Natural killer cell (primary cell): ENCODE measurements at regions of chr11 and their contacts with region 1.

Region 1: GRCh38 chr11:114134870-114135269 is 75.4 kb downstream of the ZBTB16 start:
- DNase-seq: no peak
- ATAC-seq: no peak
- H3K4me3 ChIP-seq: no peak overlapping the region
- H3K4me3 Mint-ChIP-seq: no peak overlapping the region
- H3K27ac ChIP-seq: no peak overlapping the region
- H3K27ac Mint-ChIP-seq: peak overlapping the region; percentile 85 to 88
- H3K4me1 ChIP-seq: peaks cover 83% of the 10 kb centered on the region
- H3K4me1 Mint-ChIP-seq: peaks cover 95 to 98% of the 10 kb centered on the region in 2 donors
- H3K27me3 ChIP-seq: no peaks in the 10 kb centered on the region
- H3K27me3 Mint-ChIP-seq: no peaks in the 10 kb centered on the region
- CTCF ChIP-seq: no peak

Region 2: GRCh38 chr11:114099392-114100178 is 35.3 kb before region 1 on chr11:
- intact Hi-C with region 1: loop called (anchors 5 kb)
- DNase-seq: no peak
- ATAC-seq: peak; percentile 76 to 83 (median 78)
- H3K4me3 ChIP-seq: no peak overlapping the region
- H3K4me3 Mint-ChIP-seq: peak overlapping the region; percentile 65
- H3K27ac ChIP-seq: peak overlapping the region; percentile 22
- H3K27ac Mint-ChIP-seq: peak overlapping the region; percentile 84 to 100
- H3K4me1 ChIP-seq: peaks cover 57% of the 10 kb centered on the region
- H3K4me1 Mint-ChIP-seq: peaks cover 97 to 100% of the 10 kb centered on the region in 2 donors
- H3K27me3 ChIP-seq: no peaks in the 10 kb centered on the region
- H3K27me3 Mint-ChIP-seq: no peaks in the 10 kb centered on the region
- CTCF ChIP-seq: no peak

Region 3: GRCh38 chr11:114148013-114148382 is 13.1 kb after region 1 on chr11:
- intact Hi-C with region 1: loop called (anchors 2 kb)
- DNase-seq: no peak
- ATAC-seq: peak; percentile 8 to 18 (median 11)
- H3K4me3 ChIP-seq: no peak overlapping the region
- H3K4me3 Mint-ChIP-seq: peak overlapping the region; percentile 82
- H3K27ac ChIP-seq: no peak overlapping the region
- H3K27ac Mint-ChIP-seq: peak overlapping the region; percentile 69 to 85
- H3K4me1 ChIP-seq: peaks cover 61% of the 10 kb centered on the region
- H3K4me1 Mint-ChIP-seq: peaks cover 89 to 93% of the 10 kb centered on the region in 2 donors
- H3K27me3 ChIP-seq: no peaks in the 10 kb centered on the region
- H3K27me3 Mint-ChIP-seq: no peaks in the 10 kb centered on the region
- CTCF ChIP-seq: no peak

Region 4: DNA sequence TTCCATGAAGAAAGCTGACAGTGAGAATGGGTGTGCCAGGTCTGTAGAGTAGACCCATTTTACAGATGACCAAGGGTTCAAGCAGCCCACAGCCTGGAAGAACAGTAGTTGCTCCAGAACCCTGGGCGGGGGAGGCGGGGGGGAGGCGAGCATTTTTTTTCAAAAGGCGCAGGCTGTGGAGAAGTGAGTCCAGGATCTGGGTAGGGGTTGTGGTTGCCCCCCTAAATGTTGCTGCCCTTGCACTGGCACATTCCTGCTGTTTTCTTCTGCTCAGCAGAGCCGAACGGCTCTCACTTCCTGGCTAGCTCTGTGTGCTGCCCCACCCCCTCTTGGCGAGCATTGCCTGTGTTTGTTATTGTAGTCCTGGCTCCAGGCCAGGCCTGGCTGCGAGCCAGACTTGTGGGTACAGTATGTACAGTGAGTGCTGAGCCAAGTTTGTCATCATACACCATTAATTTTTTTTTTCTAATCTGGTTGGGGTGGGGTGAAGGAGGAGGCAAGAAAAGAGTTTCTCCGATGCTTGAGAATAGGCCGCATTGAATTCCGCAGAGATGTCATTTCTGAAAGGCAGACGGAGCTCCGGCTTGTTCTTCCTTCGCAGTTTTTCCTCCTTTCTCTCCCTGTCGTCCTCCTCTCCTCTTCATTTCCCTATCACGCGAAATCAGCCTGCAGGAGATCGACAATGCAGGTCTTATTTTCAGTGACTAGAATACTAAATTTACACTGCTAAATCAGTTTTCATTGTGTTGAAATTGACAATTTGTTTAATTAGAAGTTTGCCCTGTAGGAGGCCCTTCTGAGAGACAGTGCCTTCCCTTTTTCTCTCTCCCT is 25.1 kb after region 1 on chr11:
- intact Hi-C with region 1: loop called (anchors 2 kb)
- DNase-seq: peak; percentile 98 to 99
- ATAC-seq: peak; percentile 92 to 97 (median 95)
- H3K4me3 ChIP-seq: peak overlapping the region; percentile 8
- H3K4me3 Mint-ChIP-seq: peak overlapping the region; percentile 86
- H3K27ac ChIP-seq: peak overlapping the region; percentile 73
- H3K27ac Mint-ChIP-seq: peak overlapping the region; percentile 85 to 92
- H3K4me1 ChIP-seq: peaks cover 94% of the 10 kb centered on the region
- H3K4me1 Mint-ChIP-seq: peaks cover 96 to 98% of the 10 kb centered on the region in 2 donors
- H3K27me3 ChIP-seq: no peaks in the 10 kb centered on the region
- H3K27me3 Mint-ChIP-seq: no peaks in the 10 kb centered on the region
- CTCF ChIP-seq: no peak

Region 5: GRCh38 chr11:116035977-116036376 is 1901.1 kb after region 1 on chr11:
- intact Hi-C with region 1: no loop called
- DNase-seq: no peak
- ATAC-seq: no peak
- H3K4me3 ChIP-seq: no peak overlapping the region
- H3K4me3 Mint-ChIP-seq: no peak overlapping the region
- H3K27ac ChIP-seq: no peak overlapping the region
- H3K27ac Mint-ChIP-seq: no peak overlapping the region
- H3K4me1 ChIP-seq: no peaks in the 10 kb centered on the region
- H3K4me1 Mint-ChIP-seq: no peaks in the 10 kb centered on the region
- H3K27me3 ChIP-seq: no peaks in the 10 kb centered on the region
- H3K27me3 Mint-ChIP-seq: peaks cover 0 to 6% of the 10 kb centered on the region in 2 donors
- CTCF ChIP-seq: no peak